ENCODE measurements at regions of chr5 and their contacts with region 1.

Region 1: DNA sequence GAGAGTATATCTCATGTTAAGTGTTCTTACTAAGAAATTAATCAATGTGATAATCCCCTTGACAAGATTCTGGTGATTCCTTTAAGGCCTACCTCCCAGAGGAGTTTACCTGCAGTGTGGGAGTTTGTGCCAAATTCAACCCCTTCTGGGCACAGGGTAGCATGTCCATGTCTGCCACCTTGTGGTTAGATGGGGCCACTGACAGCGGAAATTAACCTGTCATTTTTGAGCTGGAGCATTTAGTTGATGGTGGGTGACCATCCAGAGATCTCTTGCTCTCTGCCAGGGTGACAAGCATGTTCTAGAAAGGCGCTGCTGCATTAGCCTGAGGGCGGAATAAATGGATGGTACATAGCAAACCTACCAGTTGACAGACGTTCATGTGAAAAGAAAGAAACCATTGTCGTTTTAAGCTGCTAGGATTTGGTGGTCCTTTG is 132.2 kb downstream of the FBXO4 start:
- DNase-seq: no peak
- H3K4me3 ChIP-seq: no peak overlapping the region
- CTCF ChIP-seq: peak; percentile 70

Region 2: DNA sequence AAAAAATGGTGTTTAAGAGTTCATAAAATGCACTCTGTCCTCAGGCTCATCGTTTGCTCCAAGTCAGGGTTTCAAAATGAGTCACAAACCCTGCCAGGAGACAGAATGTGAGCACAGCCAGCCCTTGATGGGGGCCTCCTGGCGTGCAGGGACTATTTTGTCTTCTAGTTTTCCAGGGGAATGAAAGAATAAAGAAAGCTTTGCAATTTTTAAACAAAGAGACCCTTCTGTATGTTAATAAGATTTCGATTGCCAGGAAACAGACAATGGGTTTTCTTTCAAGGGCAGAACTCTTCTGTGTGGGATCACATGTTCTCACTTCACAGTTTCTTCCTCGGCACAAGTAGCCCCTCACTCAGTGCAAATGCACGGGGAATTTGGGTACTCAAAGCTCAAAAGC is 722.5 kb before region 1 on chr5:
- CTCF ChIA-PET with region 1: no interaction called
- POLR2A ChIA-PET with region 1: no interaction called
- DNase-seq: no peak
- H3K4me3 ChIP-seq: no peak overlapping the region
- CTCF ChIP-seq: no peak

Region 3: DNA sequence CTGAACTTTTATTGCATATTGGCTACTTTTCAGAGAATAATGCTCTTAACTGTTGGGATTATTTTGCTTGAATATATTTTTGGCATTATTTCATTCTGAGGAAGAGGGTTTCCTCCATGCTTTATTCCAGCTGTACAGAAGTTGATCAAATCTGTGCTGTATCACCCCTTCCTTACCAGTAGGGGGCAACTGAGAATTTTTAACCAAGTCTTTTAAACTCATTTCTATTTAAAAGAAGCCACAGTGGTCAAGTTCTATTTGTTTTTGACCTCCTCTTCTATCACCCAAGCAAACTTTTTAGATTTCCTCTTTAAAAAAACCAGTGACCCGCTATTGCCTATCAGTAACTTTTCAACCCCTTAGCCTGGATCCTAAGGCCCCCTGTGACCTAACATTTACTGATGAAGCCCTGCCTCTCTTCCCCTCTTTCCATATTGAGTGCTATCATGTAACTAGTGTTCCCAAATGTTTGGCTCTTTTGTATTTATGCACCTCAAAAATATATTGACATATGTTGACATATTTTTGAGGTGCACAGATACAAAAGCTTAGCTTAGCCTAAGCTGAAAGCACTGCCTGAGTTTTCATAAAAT is 51.6 kb before region 1 on chr5:
- CTCF ChIA-PET with region 1: interaction called, 24 read pairs
- POLR2A ChIA-PET with region 1: no interaction called
- DNase-seq: no peak
- H3K4me3 ChIP-seq: no peak overlapping the region
- CTCF ChIP-seq: peak; percentile 46

Region 4: DNA sequence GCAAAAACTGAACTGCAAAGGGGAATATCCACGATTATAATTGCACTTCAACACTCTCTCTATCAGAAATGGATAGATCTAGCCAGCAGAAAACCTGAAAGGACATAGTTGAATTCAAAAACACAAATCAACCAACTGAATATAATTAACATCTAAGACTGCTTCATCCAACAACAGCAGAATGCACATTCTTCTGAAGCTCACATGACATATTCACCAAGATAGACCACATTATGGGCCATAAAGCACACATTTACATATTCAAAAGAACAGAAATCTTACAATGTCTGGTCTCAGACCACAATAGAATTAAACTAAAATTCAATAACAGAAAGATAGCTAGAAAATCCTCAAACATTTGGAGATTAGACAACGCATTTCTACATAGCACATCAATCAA is 13.9 kb before region 1 on chr5:
- CTCF ChIA-PET with region 1: interaction called, 18 read pairs
- POLR2A ChIA-PET with region 1: no interaction called
- DNase-seq: no peak
- H3K4me3 ChIP-seq: no peak overlapping the region
- CTCF ChIP-seq: no peak

Measured in AG04449 (cell line).